Mammary epithelial cell (primary cell): ENCODE measurements at regions of chr20 and their contacts with region 1.

Region 1: DNA sequence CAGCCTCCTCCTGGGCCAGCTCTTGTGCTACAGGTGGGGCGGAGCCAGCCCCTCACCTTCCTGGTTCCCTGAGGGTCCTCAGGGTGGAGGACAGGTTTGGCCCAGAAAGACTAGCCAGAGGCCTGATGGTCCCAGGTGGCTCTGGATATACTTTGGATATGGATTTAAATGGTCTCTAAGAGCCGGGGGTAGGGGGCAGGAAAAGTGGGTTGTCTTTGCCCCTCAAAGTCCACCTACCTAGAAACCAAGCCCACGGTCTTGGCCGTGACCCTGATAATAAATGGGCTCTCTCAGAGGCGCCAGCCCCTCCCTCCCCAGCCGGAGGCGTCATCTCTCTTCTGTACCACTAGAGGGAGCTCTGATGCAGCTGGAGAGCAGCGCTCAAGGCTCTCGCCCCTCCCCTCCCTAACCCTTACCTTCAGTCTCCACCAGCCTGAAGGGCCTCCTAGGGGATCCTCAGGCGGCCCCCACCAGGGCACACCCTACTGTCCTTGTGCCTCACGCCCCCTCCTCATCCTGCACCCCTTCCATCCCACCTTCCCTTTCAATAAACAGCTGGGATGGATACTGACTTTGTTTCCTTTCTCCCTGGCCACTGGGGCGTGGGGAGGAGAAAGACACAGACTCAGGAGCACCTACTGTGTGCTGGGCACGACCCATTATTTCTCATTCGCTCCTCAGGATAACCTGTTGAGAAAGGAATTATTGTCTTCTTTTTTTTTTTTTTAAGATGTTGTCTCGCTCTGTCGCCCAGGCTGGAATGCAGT is 7.6 kb downstream of the NRSN2 start:
- DNase-seq: peak; percentile 56
- H3K4me3 ChIP-seq: no peak overlapping the region
- H3K27ac ChIP-seq: no peak overlapping the region
- H3K4me1 ChIP-seq: no peaks in the 10 kb centered on the region
- H3K27me3 ChIP-seq: no peaks in the 10 kb centered on the region
- CTCF ChIP-seq: peak; percentile 91 to 95

Region 2: DNA sequence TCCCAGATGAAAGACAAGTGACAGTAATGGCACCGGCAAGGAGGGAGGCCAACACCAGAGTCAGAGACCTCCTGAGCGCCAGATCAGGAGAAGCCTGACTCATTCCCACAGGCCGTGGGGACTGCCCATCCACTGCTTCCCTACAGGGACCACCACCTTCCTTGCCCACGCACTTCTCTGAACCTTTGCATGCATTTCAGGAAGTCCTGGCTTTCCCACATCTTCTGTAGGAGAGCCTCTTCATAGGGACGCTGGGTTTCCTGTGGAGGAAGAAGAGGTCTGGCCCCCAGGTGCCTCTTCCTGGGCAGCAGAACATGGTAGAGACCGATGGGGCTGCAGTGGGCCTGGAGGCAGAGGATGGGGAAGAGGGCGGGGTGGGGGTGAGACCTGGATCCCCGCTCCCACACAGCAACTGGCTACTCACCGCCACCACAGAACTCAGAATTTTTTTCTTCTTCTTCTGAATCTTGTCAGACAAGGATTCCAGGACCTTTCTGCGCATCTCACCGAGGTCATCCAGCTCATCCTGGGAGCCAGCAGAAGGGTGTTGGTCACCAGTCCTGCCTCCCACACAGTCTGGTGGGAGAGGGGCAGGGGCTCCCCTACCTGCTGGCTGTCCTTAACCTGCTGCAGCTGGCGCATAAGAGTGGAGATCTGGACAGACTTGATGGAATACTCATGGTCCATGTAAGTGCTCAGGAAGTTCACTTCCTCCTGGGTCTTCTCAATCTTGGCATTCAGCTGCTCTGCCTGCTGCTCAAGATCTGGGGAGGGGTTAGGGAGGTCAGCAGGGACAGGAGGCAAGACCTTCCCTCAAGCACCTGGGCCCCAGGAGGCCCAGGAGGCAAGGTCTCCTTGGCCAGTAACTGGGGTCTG is 77.6 kb before region 1 on chr20:
- CTCF ChIA-PET with region 1: no interaction called
- dilution Hi-C with region 1: no loop called
- in situ Hi-C with region 1: no loop called
- intact Hi-C with region 1: no loop called
- DNase-seq: no peak
- H3K4me3 ChIP-seq: no peak overlapping the region
- H3K27ac ChIP-seq: no peak overlapping the region
- H3K4me1 ChIP-seq: no peaks in the 10 kb centered on the region
- H3K27me3 ChIP-seq: peaks cover 2% of the 10 kb centered on the region
- CTCF ChIP-seq: no peak

Region 3: GRCh38 chr20:431012-431904 is 76.8 kb after region 1 on chr20:
- CTCF ChIA-PET with region 1: interaction called, 3 read pairs
- dilution Hi-C with region 1: no loop called
- in situ Hi-C with region 1: loop called in 1 of 2 experiments (anchors 5 kb)
- intact Hi-C with region 1: loop called (anchors 1 kb)
- DNase-seq: peak; percentile 30
- H3K4me3 ChIP-seq: no peak overlapping the region
- H3K27ac ChIP-seq: no peak overlapping the region
- H3K4me1 ChIP-seq: peaks cover 3% of the 10 kb centered on the region
- H3K27me3 ChIP-seq: no peaks in the 10 kb centered on the region
- CTCF ChIP-seq: peak; percentile 43 to 68

Region 4: GRCh38 chr20:561437-562231 is 207.2 kb after region 1 on chr20:
- CTCF ChIA-PET with region 1: no interaction called
- dilution Hi-C with region 1: no loop called
- in situ Hi-C with region 1: no loop called
- intact Hi-C with region 1: loop called (anchors 2 kb)
- DNase-seq: peak; percentile 50
- H3K4me3 ChIP-seq: no peak overlapping the region
- H3K27ac ChIP-seq: no peak overlapping the region
- H3K4me1 ChIP-seq: no peaks in the 10 kb centered on the region
- H3K27me3 ChIP-seq: no peaks in the 10 kb centered on the region
- CTCF ChIP-seq: peak; percentile 97 to 100

Region 5: GRCh38 chr20:667391-667964 is 313.0 kb after region 1 on chr20:
- CTCF ChIA-PET with region 1: no interaction called
- dilution Hi-C with region 1: no loop called
- in situ Hi-C with region 1: no loop called
- intact Hi-C with region 1: loop called (anchors 1 kb)
- DNase-seq: no peak
- H3K4me3 ChIP-seq: no peak overlapping the region
- H3K27ac ChIP-seq: no peak overlapping the region
- H3K4me1 ChIP-seq: peaks cover 6% of the 10 kb centered on the region
- H3K27me3 ChIP-seq: peaks cover 12% of the 10 kb centered on the region
- CTCF ChIP-seq: peak; percentile 90 to 93

Region 6: DNA sequence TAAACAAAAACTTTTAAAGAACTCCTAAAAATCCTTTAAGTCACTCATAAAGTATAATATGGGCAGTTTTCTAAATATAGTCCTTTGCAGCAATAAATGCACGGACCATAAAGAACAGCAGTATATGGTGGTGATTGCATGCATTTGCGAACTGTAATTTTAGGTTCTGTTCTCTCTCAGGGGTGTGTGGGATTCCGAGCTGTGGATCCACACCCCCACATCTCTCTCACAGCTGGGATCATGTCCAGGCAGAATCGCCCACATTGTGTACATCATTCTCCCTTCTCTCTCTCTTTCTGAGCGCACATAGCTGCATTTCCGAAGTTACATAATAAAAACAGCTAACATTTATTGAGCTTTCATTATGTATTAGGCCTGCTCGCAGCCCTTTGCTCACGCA is 385.3 kb after region 1 on chr20:
- CTCF ChIA-PET with region 1: no interaction called
- dilution Hi-C with region 1: no loop called
- in situ Hi-C with region 1: no loop called
- intact Hi-C with region 1: loop called (anchors 1 kb)
- DNase-seq: no peak
- H3K4me3 ChIP-seq: no peak overlapping the region
- H3K27ac ChIP-seq: no peak overlapping the region
- H3K4me1 ChIP-seq: no peaks in the 10 kb centered on the region
- H3K27me3 ChIP-seq: no peaks in the 10 kb centered on the region
- CTCF ChIP-seq: no peak